PC-9 (cell line): ENCODE measurements at regions of chr7 and their contacts with region 1.

Region 1: DNA sequence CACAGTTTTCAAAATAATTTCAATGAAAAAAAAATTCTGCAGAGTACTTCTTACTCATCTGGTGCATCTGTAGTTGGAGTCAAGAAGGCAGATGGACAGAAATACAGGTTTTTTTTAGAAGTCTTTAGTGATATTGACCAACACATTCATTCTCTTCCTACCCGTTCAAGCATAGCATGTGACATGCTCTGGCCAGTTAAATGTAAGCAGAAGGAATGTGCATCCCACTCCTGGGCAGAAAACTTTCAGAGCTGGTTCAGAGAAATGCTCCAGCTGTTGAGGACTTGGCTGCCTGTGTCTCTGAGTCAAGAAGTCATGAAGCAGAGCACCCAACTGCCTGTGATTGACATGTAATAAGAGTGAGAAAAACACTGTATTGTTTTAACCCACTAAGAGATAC is 665.3 kb upstream of the IGFBP3 start:
- DNase-seq: no peak
- H3K4me3 ChIP-seq: no peak overlapping the region
- H3K27ac ChIP-seq: no peak overlapping the region
- H3K4me1 ChIP-seq: peaks cover 26% of the 10 kb centered on the region
- H3K27me3 ChIP-seq: no peaks in the 10 kb centered on the region
- CTCF ChIP-seq: no peak

Region 2: GRCh38 chr7:45881759-45882464 is 704.5 kb before region 1 on chr7:
- CTCF ChIA-PET with region 1: no interaction called
- POLR2A ChIA-PET with region 1: interaction called, 10 read pairs
- intact Hi-C with region 1: no loop called
- DNase-seq: peak in 1 of 2 experiments; percentile 82
- H3K4me3 ChIP-seq: no peak overlapping the region
- H3K27ac ChIP-seq: peak overlapping the region; percentile 80
- H3K4me1 ChIP-seq: peaks cover 49% of the 10 kb centered on the region
- H3K27me3 ChIP-seq: no peaks in the 10 kb centered on the region
- CTCF ChIP-seq: no peak

Region 3: GRCh38 chr7:46600340-46600739 is 13.9 kb after region 1 on chr7:
- CTCF ChIA-PET with region 1: no interaction called
- POLR2A ChIA-PET with region 1: no interaction called
- intact Hi-C with region 1: no loop called
- DNase-seq: no peak
- H3K4me3 ChIP-seq: no peak overlapping the region
- H3K27ac ChIP-seq: no peak overlapping the region
- H3K4me1 ChIP-seq: no peaks in the 10 kb centered on the region
- H3K27me3 ChIP-seq: no peaks in the 10 kb centered on the region
- CTCF ChIP-seq: no peak